WTC11 (cell line): ENCODE measurements at regions of chr6 and their contacts with region 1.

Region 1: GRCh38 chr6:36780442-36781177 is 58.6 kb downstream of the CPNE5 start:
- DNase-seq: no peak
- ATAC-seq: no peak
- H3K4me3 Mint-ChIP-seq: no peak overlapping the region
- H3K27ac Mint-ChIP-seq: 0 out of 2 replicates have a peak overlapping the region, but pooled peaks have one; percentile 10
- H3K4me1 Mint-ChIP-seq: peaks cover 31% of the 10 kb centered on the region
- H3K27me3 Mint-ChIP-seq: no peaks in the 10 kb centered on the region
- CTCF ChIP-seq: no peak

Region 2: GRCh38 chr6:36724514-36725390 is 55.9 kb before region 1 on chr6:
- CTCF ChIA-PET with region 1: interaction called, 13 read pairs
- POLR2A ChIA-PET with region 1: no interaction called
- DNase-seq: peak; percentile 84
- ATAC-seq: peak; percentile 93
- H3K4me3 Mint-ChIP-seq: no peak overlapping the region
- H3K27ac Mint-ChIP-seq: no peak overlapping the region
- H3K4me1 Mint-ChIP-seq: peaks cover 2% of the 10 kb centered on the region; the same call in 1 of the 2 replicates
- H3K27me3 Mint-ChIP-seq: peaks cover 2% of the 10 kb centered on the region; the same call in 1 of the 2 replicates
- CTCF ChIP-seq: peak; percentile 27; the same call in 1 of the 2 replicates

Region 3: GRCh38 chr6:36793913-36794712 is 13.5 kb after region 1 on chr6:
- CTCF ChIA-PET with region 1: interaction called, 454 read pairs
- POLR2A ChIA-PET with region 1: no interaction called
- DNase-seq: no peak
- ATAC-seq: peak; percentile 69
- H3K4me3 Mint-ChIP-seq: peak overlapping the region; percentile 25; the same call in 1 of the 2 replicates
- H3K27ac Mint-ChIP-seq: peak overlapping the region; percentile 37; the same call in 1 of the 2 replicates
- H3K4me1 Mint-ChIP-seq: peaks cover 40% of the 10 kb centered on the region
- H3K27me3 Mint-ChIP-seq: no peaks in the 10 kb centered on the region
- CTCF ChIP-seq: no peak

Region 4: GRCh38 chr6:36809941-36810803 is 29.6 kb after region 1 on chr6:
- CTCF ChIA-PET with region 1: interaction called, 21 read pairs
- POLR2A ChIA-PET with region 1: no interaction called
- DNase-seq: peak; percentile 55
- ATAC-seq: peak; percentile 72
- H3K4me3 Mint-ChIP-seq: no peak overlapping the region
- H3K27ac Mint-ChIP-seq: no peak overlapping the region
- H3K4me1 Mint-ChIP-seq: peaks cover 22% of the 10 kb centered on the region
- H3K27me3 Mint-ChIP-seq: peaks cover 5% of the 10 kb centered on the region; the same call in 1 of the 2 replicates
- CTCF ChIP-seq: no peak

Region 5: GRCh38 chr6:36836111-36837021 is 55.8 kb after region 1 on chr6:
- CTCF ChIA-PET with region 1: interaction called, 13 read pairs
- POLR2A ChIA-PET with region 1: no interaction called
- DNase-seq: no peak
- ATAC-seq: no peak
- H3K4me3 Mint-ChIP-seq: no peak overlapping the region
- H3K27ac Mint-ChIP-seq: no peak overlapping the region
- H3K4me1 Mint-ChIP-seq: peaks cover 17% of the 10 kb centered on the region
- H3K27me3 Mint-ChIP-seq: peaks cover 60% of the 10 kb centered on the region
- CTCF ChIP-seq: no peak

Region 6: GRCh38 chr6:36874443-36875249 is 94.0 kb after region 1 on chr6 and contains the start of gene PPIL1:
- CTCF ChIA-PET with region 1: interaction called, 10 read pairs
- POLR2A ChIA-PET with region 1: no interaction called
- DNase-seq: peak; percentile 74
- ATAC-seq: peak; percentile 87
- H3K4me3 Mint-ChIP-seq: peak within 1 kb of the TSS; percentile 93
- H3K27ac Mint-ChIP-seq: peak within 1 kb of the TSS; percentile 100
- H3K4me1 Mint-ChIP-seq: peaks cover 19% of the 10 kb centered on the region
- H3K27me3 Mint-ChIP-seq: peaks cover 17% of the 10 kb centered on the region
- CTCF ChIP-seq: no peak
- total RNA-seq, gene PPIL1: 64.2 to 69.8 TPM (median 66.6 TPM) in 3 replicates